Activated T-helper 1 cell treated with anti-CD3 and anti-CD28 coated beads, Interleukin-12 subunit alpha, Interleukin-12 subunit beta, Interleukin-2, Interleukin-4 antibody, amounts not matched to agents 30 ng/mL and 10 ng/mL and 1 ng/mL, durations not matched to agents 14 hours and 24 hours and 36 hours (primary cell): ENCODE measurements at regions of chr2 and their contacts with region 1.

Region 1: DNA sequence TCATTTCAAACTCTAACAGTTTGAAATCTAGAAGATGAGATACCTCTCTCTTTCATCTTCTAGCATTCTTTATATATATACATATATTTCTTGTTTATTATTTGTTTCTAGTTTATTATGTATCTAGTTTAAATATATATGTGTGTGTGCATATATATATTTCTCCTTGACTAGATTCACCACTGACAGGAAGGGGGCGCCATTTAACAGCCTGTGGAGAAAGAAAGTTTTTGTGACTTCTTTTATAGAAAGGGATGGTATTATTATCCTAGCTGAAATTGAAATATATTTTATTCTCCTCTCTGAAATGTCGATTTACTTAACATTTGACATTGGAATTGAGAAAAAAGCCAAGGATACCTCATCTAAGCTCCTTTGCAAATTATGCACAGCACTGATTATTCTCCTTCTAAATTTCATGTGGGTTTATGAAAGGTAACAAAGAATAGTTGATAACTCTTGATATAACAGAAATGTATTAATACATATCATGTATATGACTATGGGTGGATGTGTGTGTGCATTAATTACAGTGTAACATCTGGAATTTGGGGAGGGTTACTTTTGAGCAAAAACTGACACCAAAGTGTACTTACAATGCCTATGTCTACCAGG is 160.7 kb upstream of the NT5C1B start:
- DNase-seq: no peak
- H3K4me3 Mint-ChIP-seq: no peak overlapping the region
- H3K27ac Mint-ChIP-seq: no peak overlapping the region
- H3K4me1 Mint-ChIP-seq: no peaks in the 10 kb centered on the region
- H3K27me3 Mint-ChIP-seq: no peaks in the 10 kb centered on the region

Region 2: DNA sequence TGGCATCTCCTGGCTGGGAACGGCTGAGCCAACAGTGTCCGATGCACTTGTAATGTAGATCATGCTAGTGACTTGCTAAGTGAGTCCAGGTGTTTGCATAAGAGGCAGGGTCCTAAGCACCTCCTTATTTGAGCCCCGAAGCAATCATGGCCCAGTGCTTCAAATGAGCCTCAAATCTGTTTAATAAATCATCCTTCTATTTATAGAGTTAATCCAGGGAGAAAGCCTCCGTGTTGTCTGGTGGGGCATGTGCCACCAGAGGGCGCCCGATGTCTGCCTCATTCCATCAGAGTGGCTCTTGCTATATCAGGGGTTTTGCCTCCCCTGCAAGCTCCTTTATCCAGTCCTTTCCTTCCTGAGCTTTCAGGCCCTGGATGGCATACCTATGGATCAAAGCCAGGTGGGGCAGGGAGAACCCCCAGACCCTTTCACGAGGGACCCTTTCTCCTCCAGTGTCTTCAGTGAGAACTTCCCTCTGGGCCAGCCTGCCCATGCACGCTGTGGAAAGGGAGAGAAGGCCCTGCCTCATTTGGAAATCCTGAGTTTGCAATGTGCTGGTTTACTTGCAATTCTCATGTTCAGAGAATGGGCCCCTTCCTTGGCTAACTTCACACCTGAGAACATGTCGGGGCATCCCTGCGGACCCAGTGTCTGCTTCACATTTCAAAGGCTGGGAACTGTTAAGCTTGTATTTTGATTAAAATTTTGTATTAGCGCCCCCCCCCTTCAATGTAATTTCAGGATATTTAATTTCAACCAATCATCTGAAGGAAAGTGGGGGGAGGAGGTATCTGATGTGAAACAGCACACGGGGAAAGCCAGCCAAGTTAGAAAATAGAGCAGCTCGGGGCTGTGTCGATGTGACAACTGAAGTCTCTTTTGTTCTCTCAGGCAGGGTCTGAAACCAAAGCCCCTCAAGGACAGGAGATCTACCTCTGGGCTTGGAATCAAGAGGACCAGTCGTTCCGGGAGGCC is 229.3 kb before region 1 on chr2:
- intact Hi-C with region 1: loop called (anchors 1 kb)
- DNase-seq: peak; percentile 46
- H3K4me3 Mint-ChIP-seq: no peak overlapping the region
- H3K27ac Mint-ChIP-seq: no peak overlapping the region
- H3K4me1 Mint-ChIP-seq: no peaks in the 10 kb centered on the region
- H3K27me3 Mint-ChIP-seq: peaks cover 8% of the 10 kb centered on the region

Region 3: GRCh38 chr2:19362755-19363473 is 612.9 kb after region 1 on chr2:
- intact Hi-C with region 1: loop called (anchors 1 kb)
- DNase-seq: no peak
- H3K4me3 Mint-ChIP-seq: peak overlapping the region; percentile 90
- H3K27ac Mint-ChIP-seq: no peak overlapping the region
- H3K4me1 Mint-ChIP-seq: peaks cover 24% of the 10 kb centered on the region
- H3K27me3 Mint-ChIP-seq: peaks cover 94% of the 10 kb centered on the region